ENCODE measurements at regions of chr6 and their contacts with region 1.

Region 1: GRCh38 chr6:89242574-89243330 is 25.6 kb upstream of the GABRR1 start:
- DNase-seq: peak in 1 of 4 donors; percentile 7
- ATAC-seq: no peak
- H3K4me3 ChIP-seq: no peak overlapping the region
- H3K27ac ChIP-seq: no peak overlapping the region
- H3K4me1 ChIP-seq: no peaks in the 10 kb centered on the region
- H3K27me3 ChIP-seq: no peaks in the 10 kb centered on the region
- CTCF ChIP-seq: peak; percentile 27 to 76 (median 65)
- POLR2A ChIP-seq: no peak

Region 2: GRCh38 chr6:88748141-88748540 is 494.6 kb before region 1 on chr6:
- intact Hi-C with region 1: no loop called
- DNase-seq: no peak
- ATAC-seq: no peak
- H3K4me3 ChIP-seq: no peak overlapping the region
- H3K27ac ChIP-seq: no peak overlapping the region
- H3K4me1 ChIP-seq: no peaks in the 10 kb centered on the region
- H3K27me3 ChIP-seq: no peaks in the 10 kb centered on the region
- CTCF ChIP-seq: no peak
- POLR2A ChIP-seq: no peak

Region 3: DNA sequence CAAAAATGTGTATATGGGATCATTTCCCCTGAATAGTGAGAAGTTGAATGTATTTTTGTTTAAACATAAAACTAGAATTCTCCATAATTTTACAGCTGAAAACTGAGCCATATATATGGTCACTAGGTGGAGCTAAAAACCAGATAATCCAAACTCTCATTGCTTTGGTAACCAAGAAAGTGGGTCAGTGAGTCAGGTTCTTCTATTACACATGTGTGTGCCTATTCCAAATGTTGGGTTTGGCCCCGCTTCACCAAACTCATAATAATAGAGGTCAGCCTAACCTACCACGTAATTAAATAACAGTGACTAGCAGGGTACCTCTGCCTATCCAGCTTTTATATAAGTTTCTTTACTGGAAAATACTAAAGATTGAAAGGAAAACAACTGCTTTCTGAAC is 260.0 kb before region 1 on chr6:
- intact Hi-C with region 1: loop called (anchors 5 kb)
- DNase-seq: peak; percentile 38 to 73 (median 68)
- ATAC-seq: peak; percentile 95
- H3K4me3 ChIP-seq: no peak overlapping the region
- H3K27ac ChIP-seq: peak overlapping the region in 1 of 4 donors; percentile 34
- H3K4me1 ChIP-seq: peaks cover 15% of the 10 kb centered on the region
- H3K27me3 ChIP-seq: no peaks in the 10 kb centered on the region
- CTCF ChIP-seq: peak; percentile 36 to 94 (median 81)
- POLR2A ChIP-seq: no peak

Region 4: GRCh38 chr6:89122625-89123024 is 120.1 kb before region 1 on chr6:
- intact Hi-C with region 1: loop called (anchors 10 kb)
- DNase-seq: peak in 1 of 4 donors; percentile 13
- ATAC-seq: no peak
- H3K4me3 ChIP-seq: no peak overlapping the region
- H3K27ac ChIP-seq: no peak overlapping the region
- H3K4me1 ChIP-seq: peaks cover 6% of the 10 kb centered on the region
- H3K27me3 ChIP-seq: no peaks in the 10 kb centered on the region
- CTCF ChIP-seq: peak in 6 of 7 experiments; percentile 26 to 56 (median 50)
- POLR2A ChIP-seq: no peak